A673 (cell line): ENCODE measurements at regions of chr6 and their contacts with region 1.

Region 1: GRCh38 chr6:159217595-159218275 is 48.5 kb downstream of the FNDC1 start:
- DNase-seq: peak; percentile 68
- H3K4me3 ChIP-seq: no peak overlapping the region
- H3K27ac ChIP-seq: no peak overlapping the region
- H3K4me1 ChIP-seq: no peaks in the 10 kb centered on the region
- H3K27me3 ChIP-seq: peaks cover 4% of the 10 kb centered on the region
- CTCF ChIP-seq: peak; percentile 68

Region 2: GRCh38 chr6:158506577-158506976 is 711.2 kb before region 1 on chr6:
- CTCF ChIA-PET with region 1: no interaction called
- POLR2A ChIA-PET with region 1: no interaction called
- intact Hi-C with region 1: no loop called
- DNase-seq: peak; percentile 35
- H3K4me3 ChIP-seq: no peak overlapping the region
- H3K27ac ChIP-seq: no peak overlapping the region
- H3K4me1 ChIP-seq: no peaks in the 10 kb centered on the region
- H3K27me3 ChIP-seq: no peaks in the 10 kb centered on the region
- CTCF ChIP-seq: peak; percentile 43

Region 3: DNA sequence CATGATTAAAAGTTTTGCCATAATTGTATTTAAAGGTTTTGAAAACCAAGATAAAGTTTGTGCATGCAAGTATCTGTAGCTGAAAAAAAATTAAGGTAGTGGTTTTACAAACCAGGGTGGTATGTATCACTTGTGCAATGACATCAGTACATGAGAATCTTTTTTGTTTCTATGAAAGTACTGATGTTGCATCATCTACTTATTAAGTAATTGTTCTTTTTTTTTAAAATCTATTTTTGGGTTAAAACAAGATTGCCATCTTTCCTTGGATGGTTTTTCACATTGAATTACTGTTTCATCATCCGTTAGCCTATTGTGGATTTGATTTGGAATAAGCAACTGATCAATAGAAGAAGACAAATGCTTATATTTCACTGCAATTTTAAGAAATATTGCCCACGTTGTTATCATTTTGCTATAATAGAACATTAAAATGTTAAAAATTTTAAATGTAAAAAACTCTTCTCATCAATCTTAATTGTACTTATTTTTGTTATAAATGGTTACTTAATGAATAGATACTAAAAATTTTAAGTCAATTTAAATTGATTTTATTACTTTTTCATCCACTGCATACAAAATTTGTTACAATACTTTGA is 133.1 kb before region 1 on chr6:
- CTCF ChIA-PET with region 1: no interaction called
- POLR2A ChIA-PET with region 1: no interaction called
- intact Hi-C with region 1: no loop called
- DNase-seq: peak; percentile 7
- H3K4me3 ChIP-seq: no peak overlapping the region
- H3K27ac ChIP-seq: no peak overlapping the region
- H3K4me1 ChIP-seq: no peaks in the 10 kb centered on the region
- H3K27me3 ChIP-seq: no peaks in the 10 kb centered on the region
- CTCF ChIP-seq: no peak

Region 4: GRCh38 chr6:159463119-159463829 is 245.5 kb after region 1 on chr6:
- CTCF ChIA-PET with region 1: interaction called, 4 read pairs
- POLR2A ChIA-PET with region 1: no interaction called
- intact Hi-C with region 1: loop called (anchors 2 kb)
- DNase-seq: peak; percentile 51
- H3K4me3 ChIP-seq: no peak overlapping the region
- H3K27ac ChIP-seq: no peak overlapping the region
- H3K4me1 ChIP-seq: no peaks in the 10 kb centered on the region
- H3K27me3 ChIP-seq: no peaks in the 10 kb centered on the region
- CTCF ChIP-seq: peak; percentile 53

Region 5: GRCh38 chr6:159608961-159609651 is 391.4 kb after region 1 on chr6:
- CTCF ChIA-PET with region 1: no interaction called
- POLR2A ChIA-PET with region 1: no interaction called
- intact Hi-C with region 1: loop called (anchors 1 kb)
- DNase-seq: peak; percentile 32
- H3K4me3 ChIP-seq: no peak overlapping the region
- H3K27ac ChIP-seq: no peak overlapping the region
- H3K4me1 ChIP-seq: no peaks in the 10 kb centered on the region
- H3K27me3 ChIP-seq: no peaks in the 10 kb centered on the region
- CTCF ChIP-seq: peak; percentile 59

Region 6: DNA sequence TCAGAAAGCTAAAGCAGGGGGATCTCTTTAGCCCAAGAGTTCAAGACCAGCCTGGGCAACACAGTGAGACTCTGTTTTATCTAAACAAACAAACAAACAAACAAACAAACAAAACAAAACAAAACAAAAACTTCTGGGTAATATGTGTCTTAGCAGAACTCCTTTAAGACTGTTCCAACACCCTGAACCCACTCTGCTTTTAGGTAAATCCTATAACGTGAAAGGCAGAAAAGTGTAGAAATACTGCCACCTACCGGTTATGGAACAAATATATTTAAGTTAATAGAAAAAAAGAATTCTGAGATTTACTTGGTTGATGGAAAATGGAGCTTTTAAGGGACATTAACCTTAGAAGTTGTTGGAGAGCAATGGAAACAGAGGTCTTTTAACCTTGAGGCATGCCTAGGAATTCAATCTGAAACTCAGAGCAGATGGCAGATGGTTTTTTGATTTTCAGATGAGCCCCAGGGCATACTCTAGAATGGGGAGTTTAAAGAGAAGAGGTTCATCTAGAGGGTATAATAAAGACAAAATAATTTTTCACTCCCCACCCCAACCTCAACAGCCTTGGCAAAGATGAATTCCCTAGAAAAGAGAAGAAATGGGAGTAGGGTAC is 436.9 kb after region 1 on chr6:
- CTCF ChIA-PET with region 1: interaction called, 7 read pairs
- POLR2A ChIA-PET with region 1: no interaction called
- intact Hi-C with region 1: loop called (anchors 1 kb)
- DNase-seq: peak; percentile 80
- H3K4me3 ChIP-seq: no peak overlapping the region
- H3K27ac ChIP-seq: no peak overlapping the region
- H3K4me1 ChIP-seq: no peaks in the 10 kb centered on the region
- H3K27me3 ChIP-seq: no peaks in the 10 kb centered on the region
- CTCF ChIP-seq: peak; percentile 66